Spleen (tissue), 13 donors: ENCODE measurements at regions of chrX and their contacts with region 1.

Region 1: DNA sequence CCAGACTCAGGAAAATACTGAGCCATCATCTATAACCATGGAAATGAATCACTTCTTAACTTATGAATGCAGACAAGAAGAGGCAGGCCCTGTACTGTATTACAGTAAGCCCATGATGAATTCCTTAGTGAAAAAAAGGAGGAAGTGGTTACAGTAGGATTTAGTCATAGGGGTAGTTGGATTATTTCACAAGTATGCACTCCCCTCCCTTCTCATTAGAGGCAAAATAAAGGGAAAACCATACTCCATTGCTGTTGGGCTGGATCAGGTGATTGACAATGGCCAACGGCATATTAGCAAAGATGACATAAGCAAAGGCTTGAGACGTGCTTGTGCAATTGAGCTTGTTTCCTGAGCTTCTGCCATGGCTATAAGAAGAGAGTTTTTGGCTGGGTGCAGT is 181.1 kb upstream of the PRPS2 start:
- DNase-seq: no peak
- H3K4me3 ChIP-seq: no peak overlapping the region
- H3K27ac ChIP-seq: no peak overlapping the region
- H3K4me1 ChIP-seq: no peaks in the 10 kb centered on the region
- H3K27me3 ChIP-seq: no peaks in the 10 kb centered on the region
- CTCF ChIP-seq: no peak
- POLR2A ChIP-seq: no peak

Region 2: DNA sequence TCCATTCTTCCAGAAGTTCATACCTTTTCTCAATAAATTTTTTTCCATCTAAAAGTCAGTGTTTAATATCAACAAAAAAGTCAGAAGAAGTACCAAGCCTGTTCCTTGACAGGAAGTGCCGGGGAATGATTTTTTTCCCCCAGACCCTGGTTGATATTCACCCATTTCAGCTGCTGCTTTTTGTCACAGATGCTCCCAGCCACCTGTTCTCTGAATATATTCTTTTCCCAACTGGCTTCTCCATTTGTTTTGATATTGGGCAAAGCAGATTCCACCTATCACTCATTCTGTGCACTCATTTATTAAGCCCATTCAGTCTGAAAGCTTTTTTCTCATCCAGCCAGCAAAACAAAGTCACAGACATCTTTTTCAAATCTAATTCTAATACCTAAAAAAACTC is 331.9 kb before region 1 on chrX:
- intact Hi-C with region 1: no loop called
- DNase-seq: no peak
- H3K4me3 ChIP-seq: no peak overlapping the region
- H3K27ac ChIP-seq: no peak overlapping the region
- H3K4me1 ChIP-seq: no peaks in the 10 kb centered on the region
- H3K27me3 ChIP-seq: no peaks in the 10 kb centered on the region
- CTCF ChIP-seq: no peak
- POLR2A ChIP-seq: no peak

Region 3: GRCh38 chrX:12554206-12554605 is 55.9 kb before region 1 on chrX:
- intact Hi-C with region 1: loop called (anchors 10 kb)
- DNase-seq: no peak
- H3K4me3 ChIP-seq: no peak overlapping the region
- H3K27ac ChIP-seq: no peak overlapping the region
- H3K4me1 ChIP-seq: no peaks in the 10 kb centered on the region
- H3K27me3 ChIP-seq: peaks cover 0 to 12% (median 0%) of the 10 kb centered on the region in 7 donors
- CTCF ChIP-seq: no peak
- POLR2A ChIP-seq: no peak